ENCODE measurements at regions of chr4 and their contacts with region 1.

Region 1: DNA sequence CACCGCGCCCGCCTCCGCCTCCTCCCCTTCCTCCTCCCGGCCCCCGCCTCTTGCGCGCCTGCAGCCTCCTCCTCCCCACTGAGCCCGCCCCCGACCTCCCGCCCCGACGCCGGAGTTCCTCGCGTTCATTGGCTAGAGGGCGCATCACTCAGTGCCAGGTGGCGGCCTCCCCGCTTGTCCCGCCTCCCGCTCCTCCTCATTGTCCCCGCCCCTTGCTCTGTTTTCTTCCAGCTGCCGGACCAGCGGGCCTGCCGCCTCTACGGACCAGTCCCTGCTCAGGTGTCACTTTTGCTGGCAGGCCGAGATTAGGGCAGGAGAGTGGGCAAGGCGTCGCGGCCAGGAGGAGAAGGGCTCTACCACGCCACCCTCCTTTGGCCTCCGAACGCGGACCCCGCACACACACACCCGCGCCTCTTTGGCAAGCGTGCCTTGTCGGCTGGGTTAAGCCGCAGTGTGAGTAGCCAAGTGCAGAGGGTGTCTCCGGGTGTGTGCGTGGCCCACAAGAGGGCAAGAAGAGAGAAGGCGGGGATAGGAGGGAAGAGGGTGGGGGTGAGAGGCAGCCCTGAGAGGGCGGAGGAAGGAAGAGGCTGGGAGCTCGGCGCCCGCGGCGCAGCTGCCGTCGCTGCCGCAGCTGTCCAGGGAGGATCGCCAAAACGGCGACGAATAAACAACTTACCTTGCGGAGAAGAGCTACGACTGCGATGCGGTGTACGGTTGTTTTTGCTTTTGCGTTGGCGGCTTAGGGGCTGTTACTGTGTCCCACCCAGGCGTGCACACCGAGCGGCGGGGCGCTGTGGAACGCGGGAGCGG is 436 bp upstream of the PPP3CA start:
- DNase-seq: peak; percentile 95
- H3K4me3 ChIP-seq: peak overlapping the region; percentile 75
- H3K27ac ChIP-seq: peak overlapping the region; percentile 73
- H3K4me1 ChIP-seq: peaks cover 20% of the 10 kb centered on the region
- CTCF ChIP-seq: peak; percentile 40

Region 2: DNA sequence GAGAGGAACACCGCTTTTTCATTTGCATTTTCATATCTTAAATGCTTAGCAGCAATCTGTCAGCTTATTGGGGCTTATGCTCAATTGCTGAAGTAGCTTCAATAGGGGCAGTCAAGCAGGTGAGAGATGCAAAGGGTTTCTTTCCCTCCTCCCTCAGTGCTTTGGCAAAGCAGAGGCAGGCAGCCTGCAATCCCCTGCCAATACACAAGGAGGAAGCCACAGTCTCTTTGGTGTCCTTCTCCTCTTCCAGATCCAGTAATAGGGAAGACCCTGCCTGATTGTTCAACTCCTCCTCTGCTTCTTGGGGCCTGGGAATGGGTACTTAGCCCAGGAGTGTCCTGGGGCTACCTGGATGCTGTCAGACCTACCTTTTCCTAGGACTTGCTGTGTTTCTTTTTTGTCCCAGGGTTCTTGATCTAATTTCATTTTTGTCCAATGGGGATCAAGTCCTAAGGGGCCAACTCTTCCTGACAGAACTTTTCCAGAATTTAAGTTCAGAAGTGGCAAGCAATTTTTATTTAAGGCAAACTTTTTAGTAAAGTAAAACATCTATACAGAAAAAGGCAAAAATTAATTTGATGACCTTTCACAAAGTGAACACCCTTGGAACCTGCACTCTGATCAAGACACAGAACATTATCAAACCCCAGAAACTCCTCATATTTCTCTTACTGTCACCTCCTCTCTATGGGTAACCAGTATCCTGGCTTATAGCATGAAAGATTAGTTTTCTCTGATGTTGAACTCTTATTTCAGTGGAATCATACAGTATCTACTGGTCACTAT is 260.8 kb before region 1 on chr4:
- CTCF ChIA-PET with region 1: no interaction called
- POLR2A ChIA-PET with region 1: no interaction called
- intact Hi-C with region 1: loop called (anchors 2 kb)
- DNase-seq: peak; percentile 39
- H3K4me3 ChIP-seq: no peak overlapping the region
- H3K27ac ChIP-seq: no peak overlapping the region
- H3K4me1 ChIP-seq: peaks cover 45% of the 10 kb centered on the region
- CTCF ChIP-seq: peak; percentile 38

Region 3: GRCh38 chr4:101103381-101104142 is 244.2 kb before region 1 on chr4:
- CTCF ChIA-PET with region 1: no interaction called
- POLR2A ChIA-PET with region 1: interaction called, 4 read pairs
- intact Hi-C with region 1: loop called (anchors 5 kb)
- DNase-seq: peak; percentile 81
- H3K4me3 ChIP-seq: peak overlapping the region; percentile 28
- H3K27ac ChIP-seq: peak overlapping the region; percentile 66
- H3K4me1 ChIP-seq: peaks cover 22% of the 10 kb centered on the region
- CTCF ChIP-seq: no peak

Region 4: DNA sequence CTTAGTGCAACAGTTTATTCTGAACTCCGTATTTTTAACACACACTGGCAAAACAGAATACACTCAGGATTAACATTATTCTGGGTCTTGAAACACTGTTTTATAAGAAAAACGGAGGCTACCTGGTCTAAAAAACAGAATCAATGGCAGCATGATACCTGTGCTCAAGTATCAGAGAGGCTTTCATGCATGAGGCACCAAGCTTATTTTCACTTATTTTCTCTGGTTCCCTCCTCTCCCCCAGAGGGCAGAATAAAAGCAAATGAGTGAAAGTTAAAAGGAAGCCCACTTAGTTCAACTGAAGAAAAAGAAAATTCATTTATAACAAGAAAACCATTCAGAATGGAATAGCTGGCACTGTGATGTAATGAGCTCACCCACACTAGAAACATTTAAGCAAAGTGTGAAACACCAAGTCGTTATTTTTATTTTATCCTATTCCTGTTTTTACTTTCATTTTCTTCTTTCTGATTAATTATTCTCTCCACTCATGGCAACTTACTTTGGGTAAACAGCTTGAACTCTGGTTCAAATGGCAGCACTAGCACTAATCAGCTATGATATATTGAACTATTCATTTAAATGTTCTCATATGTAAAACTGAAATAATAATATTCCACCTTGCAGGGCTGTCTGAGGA is 212.3 kb before region 1 on chr4:
- CTCF ChIA-PET with region 1: no interaction called
- POLR2A ChIA-PET with region 1: no interaction called
- intact Hi-C with region 1: loop called (anchors 10 kb)
- DNase-seq: peak; percentile 10
- H3K4me3 ChIP-seq: peak overlapping the region; percentile 26
- H3K27ac ChIP-seq: no peak overlapping the region
- H3K4me1 ChIP-seq: peaks cover 31% of the 10 kb centered on the region
- CTCF ChIP-seq: peak; percentile 35; the same call in 1 of the 2 replicates

Region 5: DNA sequence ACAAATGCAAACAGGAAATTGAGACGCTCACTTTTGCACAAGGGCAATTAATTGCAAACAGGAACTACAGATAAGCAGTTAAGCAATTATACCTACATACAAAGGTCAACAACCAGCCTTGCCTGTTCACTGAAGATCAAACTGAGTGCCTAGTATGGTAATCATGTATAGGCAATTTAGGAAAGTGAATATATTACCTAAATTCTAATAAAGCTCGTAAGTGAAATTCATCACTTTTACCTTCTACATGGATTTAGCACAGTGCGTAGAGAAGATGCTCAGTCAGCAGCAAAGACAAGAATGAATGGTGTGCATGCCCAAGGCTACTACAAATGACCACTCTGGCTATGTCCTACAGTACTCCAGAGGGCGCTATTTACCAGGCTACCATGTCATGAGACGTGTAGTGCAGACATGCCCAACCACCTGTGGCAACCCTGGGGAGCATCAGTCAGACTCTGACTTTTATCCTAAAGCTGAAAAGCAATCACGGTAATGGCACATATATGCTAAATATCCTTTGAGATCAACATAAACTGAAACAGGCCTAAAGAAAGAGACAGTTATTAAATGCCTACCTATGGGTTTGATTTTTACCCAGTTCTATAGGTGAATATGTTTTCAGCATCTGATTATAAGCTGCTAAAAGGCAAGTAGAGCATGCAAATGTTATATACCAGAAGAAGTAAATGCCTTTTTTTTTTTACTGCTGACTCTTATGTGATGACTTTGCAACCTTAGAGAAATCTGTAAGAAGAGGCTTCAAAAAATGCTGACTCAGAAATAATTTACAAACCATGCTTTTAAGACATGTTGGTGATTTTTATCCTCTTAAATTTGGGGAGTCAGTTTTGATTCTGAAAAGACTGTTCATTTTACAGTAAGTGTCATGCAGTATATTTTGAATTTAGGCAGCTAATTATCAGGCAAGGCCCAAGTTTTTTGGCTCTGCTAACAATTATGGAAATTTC is 178.4 kb before region 1 on chr4:
- CTCF ChIA-PET with region 1: no interaction called
- POLR2A ChIA-PET with region 1: no interaction called
- intact Hi-C with region 1: loop called (anchors 10 kb)
- DNase-seq: peak; percentile 73
- H3K4me3 ChIP-seq: no peak overlapping the region
- H3K27ac ChIP-seq: no peak overlapping the region
- H3K4me1 ChIP-seq: peaks cover 6% of the 10 kb centered on the region
- CTCF ChIP-seq: peak; percentile 81

Region 6: DNA sequence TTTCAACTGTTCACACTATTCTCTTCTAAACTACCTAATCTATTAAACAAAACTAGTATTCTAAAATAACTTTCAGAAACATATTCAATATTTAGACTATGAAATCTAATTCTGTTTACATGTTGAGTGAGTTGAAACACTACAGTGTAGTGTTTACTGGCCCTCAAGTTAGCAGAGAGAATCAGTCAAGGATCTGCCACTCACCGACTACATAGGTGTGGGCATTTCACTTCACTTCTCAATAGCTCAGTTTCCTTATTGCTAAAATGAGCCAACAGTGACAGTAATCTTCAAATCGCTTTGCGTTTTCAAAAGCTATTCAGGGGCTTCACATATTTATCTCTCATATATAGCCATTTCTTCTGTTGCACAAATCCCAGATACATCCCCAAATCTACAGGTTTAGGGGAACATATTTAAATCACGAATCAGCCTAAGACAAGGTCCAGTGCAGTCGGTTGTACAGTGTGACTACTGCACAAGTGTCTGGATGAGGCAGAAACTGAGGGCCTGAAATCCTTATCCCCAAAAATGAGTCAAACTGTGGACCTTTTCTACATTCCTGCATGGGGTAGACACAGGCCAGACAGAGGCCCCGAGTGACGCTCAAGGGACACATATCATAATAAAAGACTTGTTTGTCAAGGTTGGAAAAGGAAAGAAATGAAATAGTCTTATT is 130.3 kb before region 1 on chr4:
- CTCF ChIA-PET with region 1: no interaction called
- POLR2A ChIA-PET with region 1: no interaction called
- intact Hi-C with region 1: no loop called
- DNase-seq: no peak
- H3K4me3 ChIP-seq: no peak overlapping the region
- H3K27ac ChIP-seq: no peak overlapping the region
- H3K4me1 ChIP-seq: no peaks in the 10 kb centered on the region
- CTCF ChIP-seq: no peak